Heart left ventricle (tissue), 16 donors: ENCODE measurements at regions of chr6 and their contacts with region 1.

Region 1: DNA sequence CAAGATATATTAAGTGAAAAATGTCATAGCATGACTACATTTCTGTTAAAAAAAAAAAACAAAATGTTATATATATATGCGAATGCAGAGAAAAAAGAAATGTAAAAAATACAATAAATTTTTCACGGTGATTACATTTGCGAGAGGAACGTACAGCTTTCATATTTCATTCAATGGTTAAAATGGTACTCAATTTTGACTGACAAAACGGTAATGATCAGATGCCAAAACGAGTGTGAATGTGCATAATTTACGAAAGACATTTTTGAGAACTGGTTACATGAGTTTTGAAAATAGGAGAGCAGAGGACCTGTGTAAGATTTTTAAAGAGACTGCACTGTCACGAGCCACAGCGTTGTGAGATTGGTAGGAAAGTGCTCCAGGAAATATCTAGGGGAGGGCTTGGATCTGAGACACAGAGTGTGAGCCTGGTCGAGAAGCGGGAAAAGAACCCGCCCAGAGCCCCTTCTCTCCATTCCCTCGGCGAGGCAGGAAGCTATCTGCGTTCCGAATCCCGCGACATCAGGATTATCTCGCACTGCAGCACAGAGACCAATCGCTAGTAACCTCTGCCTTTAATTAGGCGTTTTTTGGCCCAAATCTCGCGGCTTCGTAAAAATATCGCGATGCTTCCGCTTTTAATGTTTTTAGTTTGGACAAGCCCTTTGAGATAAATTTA is 28.5 kb downstream of the TRIM27 start:
- DNase-seq: peak; percentile 92 to 94 (median 92)
- ATAC-seq: peak; percentile 88 to 91 (median 90)
- H3K4me3 ChIP-seq: peak overlapping the region; percentile 51 to 87 (median 73)
- H3K27ac ChIP-seq: peak overlapping the region; percentile 80 to 99 (median 96)
- H3K4me1 ChIP-seq: peaks cover 0 to 18% (median 7%) of the 10 kb centered on the region in 12 donors
- H3K27me3 ChIP-seq: no peaks in the 10 kb centered on the region
- CTCF ChIP-seq: no peak
- POLR2A ChIP-seq: peak in 1 of 2 donors; percentile 81

Region 2: GRCh38 chr6:28863604-28864320 is 31.5 kb before region 1 on chr6:
- intact Hi-C with region 1: loop called in 2 of 10 experiments (anchors 1 to 2 kb)
- DNase-seq: peak; percentile 55 to 78 (median 59)
- ATAC-seq: peak; percentile 79 to 90 (median 88)
- H3K4me3 ChIP-seq: peak overlapping the region; percentile 42 to 93 (median 78)
- H3K27ac ChIP-seq: peak overlapping the region in 7 of 12 donors; percentile 0 to 77 (median 41)
- H3K4me1 ChIP-seq: peaks cover 0 to 19% (median 7%) of the 10 kb centered on the region in 12 donors
- H3K27me3 ChIP-seq: peaks cover 0 to 10% (median 0%) of the 10 kb centered on the region in 9 donors
- CTCF ChIP-seq: no peak
- POLR2A ChIP-seq: no peak

Region 3: GRCh38 chr6:28880894-28881780 is 14.1 kb before region 1 on chr6:
- intact Hi-C with region 1: loop called in 1 of 10 experiments (anchors 2 kb)
- DNase-seq: peak; percentile 46 to 69 (median 65)
- ATAC-seq: peak in 3 of 4 donors; percentile 59 to 78 (median 76)
- H3K4me3 ChIP-seq: peak overlapping the region; percentile 18 to 68 (median 59)
- H3K27ac ChIP-seq: peak overlapping the region in 2 of 12 donors; percentile 24 to 55
- H3K4me1 ChIP-seq: peaks cover 0 to 5% (median 0%) of the 10 kb centered on the region in 12 donors
- H3K27me3 ChIP-seq: peaks cover 0 to 24% (median 7%) of the 10 kb centered on the region in 9 donors
- CTCF ChIP-seq: no peak
- POLR2A ChIP-seq: no peak

Region 4: DNA sequence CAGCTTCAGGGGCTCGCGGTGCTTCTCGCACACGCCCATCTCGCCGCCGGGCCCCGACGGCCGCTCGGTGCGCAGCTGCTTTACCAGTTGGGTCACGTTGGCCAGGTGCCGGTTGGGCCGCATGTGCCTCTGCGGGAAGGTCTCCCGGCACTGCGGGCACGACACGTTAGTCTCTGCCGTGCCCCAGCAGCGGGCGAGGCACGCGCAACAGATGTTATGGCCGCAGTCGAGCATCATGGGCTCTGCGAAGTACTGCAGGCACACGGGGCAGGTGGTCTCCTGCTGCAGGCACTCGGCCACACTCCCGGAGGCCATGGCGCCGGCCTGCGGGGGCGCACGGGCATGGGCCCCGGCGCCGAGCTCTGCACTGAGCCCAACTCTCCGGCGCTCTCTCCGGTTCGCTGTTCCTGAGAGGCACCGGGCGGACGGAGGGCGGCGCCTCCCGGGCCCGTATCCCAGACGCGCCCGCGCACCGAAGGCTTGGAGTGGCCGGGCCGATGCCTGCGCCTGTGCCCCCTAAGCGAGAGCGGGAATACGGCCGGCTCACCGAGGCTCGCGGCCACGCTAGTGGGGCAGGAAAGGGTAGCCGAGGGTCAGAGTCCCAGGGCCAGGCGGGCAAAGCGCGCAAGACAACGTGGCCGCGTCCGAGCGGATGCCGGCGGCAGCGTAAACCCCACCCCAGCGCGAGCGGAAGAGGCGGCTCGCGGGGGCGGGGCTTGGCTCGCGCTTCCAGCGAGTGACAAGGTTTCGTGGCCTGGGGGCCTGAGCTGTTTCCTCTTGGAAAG is 28.2 kb after region 1 on chr6 and contains the start of gene TRIM27:
- intact Hi-C with region 1: loop called in 4 of 10 experiments (anchors 1 to 2 kb)
- DNase-seq: peak; percentile 93 to 96 (median 95)
- ATAC-seq: peak; percentile 94 to 98 (median 98)
- H3K4me3 ChIP-seq: peak within 1 kb of the TSS; percentile 85 to 100 (median 90)
- H3K27ac ChIP-seq: peak within 1 kb of the TSS; percentile 67 to 98 (median 96)
- H3K4me1 ChIP-seq: peaks cover 0 to 46% (median 19%) of the 10 kb centered on the region in 12 donors
- H3K27me3 ChIP-seq: no peaks in the 10 kb centered on the region
- CTCF ChIP-seq: peak in 2 of 12 donors; percentile 14 to 20
- POLR2A ChIP-seq: peak in 1 of 2 donors; percentile 91
- total RNA-seq, gene TRIM27: 14.7 to 37.7 (median 19.8) TPM

Region 5: DNA sequence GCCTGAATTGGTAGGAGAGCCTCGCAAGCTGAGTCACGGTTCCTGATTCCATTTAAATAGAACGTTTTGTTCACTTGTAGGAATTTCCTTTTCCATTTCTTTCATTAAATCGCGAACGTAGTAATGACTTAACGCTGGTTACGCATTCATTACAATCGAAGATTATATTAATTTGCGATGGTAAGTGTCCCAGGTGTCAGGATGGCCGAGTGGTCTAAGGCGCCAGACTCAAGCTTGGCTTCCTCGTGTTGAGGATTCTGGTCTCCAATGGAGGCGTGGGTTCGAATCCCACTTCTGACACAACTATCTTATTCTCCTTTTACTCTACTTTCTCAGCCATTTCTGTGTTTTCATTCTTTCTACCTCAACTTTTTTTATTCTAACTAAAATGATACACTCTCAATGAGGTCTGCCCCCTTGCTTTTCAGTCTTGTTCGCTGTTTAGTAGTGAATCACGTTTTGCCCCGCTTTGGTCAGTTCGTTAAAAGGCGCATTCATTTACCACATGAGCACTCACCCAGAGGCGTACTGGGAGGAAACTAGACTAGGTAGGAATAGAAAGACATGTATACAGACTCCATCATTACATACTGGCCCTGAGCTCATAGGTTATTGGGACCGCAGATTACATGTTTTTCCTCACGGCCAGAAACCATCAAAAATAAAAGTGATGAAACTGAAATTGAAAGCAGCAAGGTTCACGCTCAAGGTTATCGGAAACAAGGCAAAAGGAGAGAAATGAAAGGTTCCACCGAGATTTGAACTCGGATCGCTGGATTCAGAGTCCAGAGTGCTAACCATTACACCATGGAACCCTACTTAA is 45.8 kb after region 1 on chr6:
- intact Hi-C with region 1: loop called in 7 of 10 experiments (anchors 1 to 5 kb)
- DNase-seq: peak in 4 of 5 donors; percentile 72 to 83 (median 80)
- ATAC-seq: peak; percentile 74 to 92 (median 82)
- H3K4me3 ChIP-seq: peak overlapping the region; percentile 42 to 70 (median 64)
- H3K27ac ChIP-seq: peak overlapping the region; percentile 36 to 85 (median 69)
- H3K4me1 ChIP-seq: peaks cover 0 to 33% (median 8%) of the 10 kb centered on the region in 12 donors
- H3K27me3 ChIP-seq: no peaks in the 10 kb centered on the region
- CTCF ChIP-seq: no peak
- POLR2A ChIP-seq: no peak

Region 6: DNA sequence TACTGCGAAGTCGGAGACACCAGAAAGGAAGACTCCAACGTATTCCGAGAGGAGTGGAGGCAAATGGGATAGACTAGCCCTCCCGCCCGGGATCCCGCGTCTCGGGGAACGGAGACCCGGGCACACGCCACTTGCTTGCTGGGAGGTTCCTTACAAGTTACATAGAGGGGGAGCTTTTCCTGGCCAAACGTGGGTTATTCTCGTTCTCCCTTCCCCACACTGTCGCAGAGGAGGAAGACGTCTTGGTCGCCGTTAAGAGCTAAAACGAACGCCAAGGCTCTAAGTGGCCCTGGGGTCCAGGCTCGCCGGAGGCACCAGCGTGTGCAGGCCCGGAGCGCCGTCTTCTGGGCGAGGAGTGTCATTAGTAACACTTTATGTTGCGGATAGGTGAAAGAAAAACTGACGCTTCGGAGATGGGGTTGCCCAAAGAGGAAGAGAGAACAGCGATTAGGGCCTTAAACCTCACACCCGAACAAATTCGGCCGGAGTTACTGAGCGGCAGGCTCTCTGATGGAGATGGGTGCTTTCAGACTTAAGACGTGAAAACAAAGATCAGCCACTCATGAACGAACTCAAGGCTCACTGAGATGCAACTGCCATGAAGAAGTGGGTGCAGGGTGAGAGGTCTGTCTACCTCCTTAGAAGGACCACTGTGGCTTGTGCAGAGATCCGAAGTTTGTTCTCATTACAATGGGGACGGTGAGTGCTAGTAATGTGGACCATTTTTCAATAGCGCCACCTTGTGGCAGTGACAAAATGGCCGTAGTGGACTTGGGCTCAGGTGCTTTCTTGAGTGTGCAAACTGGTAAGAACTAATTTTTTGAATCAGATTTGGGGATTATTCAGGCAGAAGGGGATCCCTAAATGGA is 121.5 kb after region 1 on chr6:
- intact Hi-C with region 1: no loop called
- DNase-seq: peak; percentile 66 to 83 (median 79)
- ATAC-seq: peak; percentile 67 to 97 (median 92)
- H3K4me3 ChIP-seq: peak overlapping the region; percentile 7 to 70 (median 54)
- H3K27ac ChIP-seq: peak overlapping the region in 2 of 12 donors; percentile 26 to 55
- H3K4me1 ChIP-seq: peaks cover 0 to 11% (median 2%) of the 10 kb centered on the region in 12 donors
- H3K27me3 ChIP-seq: peaks cover 3 to 66% (median 37%) of the 10 kb centered on the region in 9 donors
- CTCF ChIP-seq: peak; percentile 75 to 90 (median 80)
- POLR2A ChIP-seq: no peak